Activated B cell treated with CpG ODN at 0.5 μM for 24 hours (primary cell): ENCODE measurements at regions of chr17 and their contacts with region 1.

Region 1: DNA sequence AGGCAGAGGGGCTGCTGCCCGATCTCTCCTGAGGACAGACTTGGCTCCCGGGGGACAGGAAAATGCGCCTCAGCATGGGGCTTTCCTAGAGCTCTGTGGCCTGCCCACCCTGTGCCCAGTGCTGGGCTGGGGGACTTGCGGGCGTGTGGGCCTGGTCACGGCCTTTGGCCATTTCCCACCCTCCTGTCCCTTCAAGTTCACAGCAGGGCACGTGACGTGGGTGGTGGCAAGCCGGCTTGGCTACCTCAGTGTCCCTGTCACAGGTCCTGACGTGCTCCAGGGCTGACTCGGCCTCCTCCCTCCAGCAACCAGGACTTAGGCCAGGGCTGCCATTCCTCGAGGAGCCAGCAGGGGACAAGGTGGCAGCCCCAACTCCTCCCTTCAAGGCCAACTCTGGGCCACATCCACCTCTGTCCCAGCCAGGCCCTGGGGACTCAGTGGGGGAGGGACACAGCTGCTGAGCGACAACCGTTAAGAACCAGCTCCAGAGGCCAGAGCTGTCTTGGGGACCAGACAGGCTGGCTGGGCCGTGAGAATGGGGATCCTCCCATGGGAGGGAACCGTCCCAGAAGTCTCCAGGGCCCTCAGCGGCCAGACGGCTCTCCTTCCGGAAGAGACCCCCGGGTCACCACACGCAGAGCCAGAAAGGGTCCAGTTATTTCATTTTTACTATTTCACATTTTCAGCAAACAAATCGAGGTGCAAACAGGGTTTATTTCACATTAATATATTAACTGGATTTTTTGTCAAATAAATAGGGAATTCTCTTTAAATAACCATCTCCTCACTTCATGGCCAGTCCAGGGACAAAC is 1.1 kb upstream of the UNC13D start:
- DNase-seq: peak; percentile 71
- ATAC-seq: peak; percentile 90
- H3K4me3 Mint-ChIP-seq: peak overlapping the region; percentile 66
- H3K27ac Mint-ChIP-seq: peak overlapping the region; percentile 75
- H3K4me1 Mint-ChIP-seq: peaks cover 29% of the 10 kb centered on the region
- H3K27me3 Mint-ChIP-seq: no peaks in the 10 kb centered on the region
- CTCF ChIP-seq: no peak

Region 2: DNA sequence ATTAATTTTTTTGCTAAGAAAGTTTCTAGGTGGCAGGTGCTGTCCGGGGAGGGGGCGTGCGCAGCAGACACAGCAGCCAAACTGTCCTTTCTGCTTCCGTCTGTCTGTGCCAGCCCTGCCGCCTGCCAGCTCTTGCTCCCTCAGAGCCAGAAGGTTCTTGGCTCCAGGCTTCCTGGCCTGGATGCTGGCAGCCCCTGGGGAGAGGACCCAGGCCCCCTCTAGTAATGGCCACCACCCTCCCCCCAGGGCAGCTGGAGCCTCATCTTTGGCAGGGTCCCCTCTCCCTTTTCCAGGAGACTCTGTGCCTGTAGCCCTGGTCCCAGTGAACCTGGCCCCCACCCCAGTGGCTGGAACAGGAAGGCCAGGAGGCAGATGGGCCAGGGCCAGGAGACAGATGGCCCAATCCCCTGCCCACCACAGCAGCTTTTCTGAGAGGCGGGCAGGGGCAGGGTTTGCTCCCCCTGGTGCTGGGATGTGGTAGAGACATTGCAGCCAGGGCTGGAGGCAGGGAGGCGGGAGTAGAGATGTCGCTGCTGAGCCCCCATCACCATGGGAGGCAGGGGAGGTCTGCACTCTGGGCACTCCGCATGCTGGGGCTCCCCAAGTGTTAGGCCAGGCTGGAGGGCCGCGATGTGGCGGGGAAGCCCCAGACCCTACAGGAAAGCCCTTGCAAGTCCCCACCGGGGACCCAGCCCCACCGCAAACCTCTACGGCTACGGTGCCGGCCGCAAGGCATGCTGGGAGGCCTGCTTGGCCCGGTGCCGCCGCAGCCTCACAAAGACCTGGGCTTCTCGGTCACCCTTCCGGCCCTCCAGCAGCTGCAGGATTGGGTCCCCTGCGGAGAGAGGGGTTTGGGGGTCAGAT is 17.8 kb before region 1 on chr17:
- CTCF ChIA-PET with region 1: interaction called, 17 read pairs
- POLR2A ChIA-PET with region 1: interaction called, 22 read pairs
- intact Hi-C with region 1: no loop called
- DNase-seq: peak; percentile 64
- ATAC-seq: peak; percentile 85
- H3K4me3 Mint-ChIP-seq: peak overlapping the region; percentile 64
- H3K27ac Mint-ChIP-seq: peak overlapping the region; percentile 79
- H3K4me1 Mint-ChIP-seq: peaks cover 16% of the 10 kb centered on the region
- H3K27me3 Mint-ChIP-seq: no peaks in the 10 kb centered on the region
- CTCF ChIP-seq: no peak

Region 3: GRCh38 chr17:75896415-75897159 is 51.3 kb after region 1 on chr17 and contains the start of gene TRIM65:
- CTCF ChIA-PET with region 1: interaction called, 4 read pairs
- POLR2A ChIA-PET with region 1: interaction called, 26 read pairs
- intact Hi-C with region 1: loop called (anchors 1 kb)
- DNase-seq: peak; percentile 86
- ATAC-seq: peak; percentile 85
- H3K4me3 Mint-ChIP-seq: peak within 1 kb of the TSS; percentile 82
- H3K27ac Mint-ChIP-seq: peak within 1 kb of the TSS; percentile 73
- H3K4me1 Mint-ChIP-seq: peaks cover 27% of the 10 kb centered on the region
- H3K27me3 Mint-ChIP-seq: no peaks in the 10 kb centered on the region
- CTCF ChIP-seq: no peak
- total RNA-seq, gene TRIM65: 20.0 and 22.4 TPM in 2 replicates

Region 4: GRCh38 chr17:75978938-75979704 is 133.9 kb after region 1 on chr17 and contains the starts of genes ACOX1 and TEN1:
- CTCF ChIA-PET with region 1: no interaction called
- POLR2A ChIA-PET with region 1: no interaction called
- intact Hi-C with region 1: no loop called
- DNase-seq: peak; percentile 91
- ATAC-seq: peak; percentile 94
- H3K4me3 Mint-ChIP-seq: peak within 1 kb of the TSS; percentile 100
- H3K27ac Mint-ChIP-seq: peak within 1 kb of the TSS; percentile 100
- H3K4me1 Mint-ChIP-seq: peaks cover 37% of the 10 kb centered on the region
- H3K27me3 Mint-ChIP-seq: no peaks in the 10 kb centered on the region
- CTCF ChIP-seq: no peak
- total RNA-seq, gene ACOX1: 23.3 and 25.8 TPM in 2 replicates
- total RNA-seq, gene TEN1: 22.7 and 23.2 TPM in 2 replicates